ENCODE measurements at regions of chr5 and their contacts with region 1.

Region 1: DNA sequence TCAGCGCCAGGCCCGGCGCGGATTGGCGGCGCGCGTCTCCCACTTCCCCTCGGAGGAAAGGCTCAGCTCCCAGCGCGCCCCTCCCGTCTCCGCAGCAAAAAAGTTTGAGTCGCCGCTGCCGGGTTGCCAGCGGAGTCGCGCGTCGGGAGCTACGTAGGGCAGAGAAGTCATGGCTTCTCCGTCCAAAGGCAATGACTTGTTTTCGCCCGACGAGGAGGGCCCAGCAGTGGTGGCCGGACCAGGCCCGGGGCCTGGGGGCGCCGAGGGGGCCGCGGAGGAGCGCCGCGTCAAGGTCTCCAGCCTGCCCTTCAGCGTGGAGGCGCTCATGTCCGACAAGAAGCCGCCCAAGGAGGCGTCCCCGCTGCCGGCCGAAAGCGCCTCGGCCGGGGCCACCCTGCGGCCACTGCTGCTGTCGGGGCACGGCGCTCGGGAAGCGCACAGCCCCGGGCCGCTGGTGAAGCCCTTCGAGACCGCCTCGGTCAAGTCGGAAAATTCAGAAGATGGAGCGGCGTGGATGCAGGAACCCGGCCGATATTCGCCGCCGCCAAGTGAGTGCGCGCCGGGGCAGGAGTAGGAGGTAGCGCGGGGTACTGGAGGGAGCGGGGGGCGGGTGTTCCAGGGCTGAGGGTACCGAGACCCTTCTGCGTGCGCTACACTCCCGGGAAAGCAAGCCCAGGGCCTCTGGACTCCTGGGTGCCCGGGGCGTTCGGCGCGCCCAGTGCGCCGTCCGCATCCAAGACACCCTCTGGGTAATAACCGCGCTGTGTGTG is at the start of gene MSX2:
- DNase-seq: peak; percentile 88 to 93
- H3K4me3 ChIP-seq: peak within 1 kb of the TSS; percentile 82
- H3K4me1 ChIP-seq: peaks cover 33% of the 10 kb centered on the region
- H3K27me3 ChIP-seq: no peaks in the 10 kb centered on the region

Region 2: DNA sequence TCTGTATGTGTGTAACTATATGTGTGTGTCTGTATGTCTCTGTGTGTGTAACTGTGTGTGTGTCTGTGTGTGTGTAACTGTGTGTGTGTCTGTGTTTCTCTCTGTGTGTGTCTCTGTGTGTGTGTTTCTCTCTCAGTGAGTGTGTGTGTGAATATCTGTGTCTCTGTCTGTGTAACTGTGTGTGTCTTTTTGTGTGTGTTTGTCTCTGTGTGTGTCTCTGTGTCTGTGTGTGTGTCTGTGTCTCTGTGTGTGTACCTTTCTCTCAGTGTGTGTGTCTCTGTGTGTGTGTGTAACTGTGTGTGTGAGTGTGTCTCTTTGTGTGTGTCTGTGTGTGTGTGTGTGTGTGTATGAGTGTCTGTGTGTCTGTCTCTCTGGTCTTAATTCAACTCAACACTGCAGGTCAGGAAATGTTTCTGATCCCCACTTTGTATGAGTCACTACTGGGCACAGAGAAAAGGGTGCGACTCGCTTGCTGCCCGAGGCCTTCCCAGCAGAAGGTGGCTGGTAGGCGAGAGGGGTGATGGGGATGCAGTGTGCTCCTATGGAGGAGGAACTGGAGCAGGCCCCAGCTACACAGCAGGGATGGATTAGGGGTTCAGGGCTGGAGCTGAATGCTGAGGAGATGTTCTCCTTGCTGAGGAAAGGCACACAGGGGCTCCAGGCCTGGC is 627.0 kb before region 1 on chr5:
- in situ Hi-C with region 1: no loop called
- DNase-seq: no peak
- H3K4me3 ChIP-seq: no peak overlapping the region
- H3K4me1 ChIP-seq: no peaks in the 10 kb centered on the region
- H3K27me3 ChIP-seq: no peaks in the 10 kb centered on the region

Region 3: DNA sequence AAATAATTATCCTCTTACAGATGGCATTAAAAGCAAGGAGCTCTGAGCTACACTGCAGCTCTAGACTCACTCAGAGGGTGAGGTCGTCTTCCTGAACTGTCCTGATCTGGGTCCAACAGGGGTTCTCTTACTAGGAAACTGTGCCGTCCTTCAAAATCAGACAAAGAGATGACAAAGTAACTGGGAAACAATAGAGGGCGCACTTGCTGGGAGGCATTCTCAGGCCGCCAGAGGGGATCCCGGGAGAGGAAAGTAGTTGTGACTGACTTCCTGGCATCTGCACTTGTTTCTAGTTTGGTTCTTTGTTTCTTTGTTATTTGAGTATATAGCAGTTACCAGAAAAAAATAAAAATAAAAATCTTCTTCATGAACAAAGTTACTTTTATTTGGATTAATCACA is 143.2 kb before region 1 on chr5:
- in situ Hi-C with region 1: loop called (anchors 10 kb)
- DNase-seq: peak; percentile 46 to 72
- H3K4me3 ChIP-seq: no peak overlapping the region
- H3K4me1 ChIP-seq: no peaks in the 10 kb centered on the region; the same call in 1 of the 2 replicates
- H3K27me3 ChIP-seq: no peaks in the 10 kb centered on the region

Region 4: DNA sequence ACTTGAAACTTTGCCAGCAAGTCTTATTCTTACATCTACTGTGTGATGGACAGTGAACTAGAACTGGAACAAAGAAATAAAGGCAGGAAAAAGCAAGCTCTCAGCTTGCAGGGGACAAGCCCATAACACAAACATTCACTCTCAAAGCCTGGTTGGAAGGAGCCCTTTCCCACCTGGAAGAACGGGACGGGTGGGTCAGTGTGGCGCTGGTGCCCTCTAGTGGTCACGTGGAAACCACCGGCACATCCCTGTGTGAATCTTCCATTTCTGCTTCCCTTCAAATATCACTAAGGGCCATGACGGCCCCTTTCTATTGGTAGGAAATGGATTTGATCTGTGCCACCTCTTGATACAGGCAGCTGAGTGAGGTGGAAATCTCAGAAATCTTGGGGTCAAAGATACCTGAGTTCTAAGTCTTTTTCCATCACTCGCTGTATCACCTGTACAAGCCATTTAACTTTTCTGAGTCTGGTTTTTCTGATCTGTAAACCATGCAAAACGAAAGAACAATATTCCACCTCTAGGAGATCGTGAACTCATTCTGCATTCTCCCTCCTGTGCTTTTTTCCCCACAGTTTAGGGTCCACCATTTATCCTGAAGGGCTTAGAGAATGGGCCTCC is 211.3 kb after region 1 on chr5:
- in situ Hi-C with region 1: no loop called
- DNase-seq: peak; percentile 30 to 79
- H3K4me3 ChIP-seq: no peak overlapping the region
- H3K4me1 ChIP-seq: no peaks in the 10 kb centered on the region
- H3K27me3 ChIP-seq: no peaks in the 10 kb centered on the region

Region 5: DNA sequence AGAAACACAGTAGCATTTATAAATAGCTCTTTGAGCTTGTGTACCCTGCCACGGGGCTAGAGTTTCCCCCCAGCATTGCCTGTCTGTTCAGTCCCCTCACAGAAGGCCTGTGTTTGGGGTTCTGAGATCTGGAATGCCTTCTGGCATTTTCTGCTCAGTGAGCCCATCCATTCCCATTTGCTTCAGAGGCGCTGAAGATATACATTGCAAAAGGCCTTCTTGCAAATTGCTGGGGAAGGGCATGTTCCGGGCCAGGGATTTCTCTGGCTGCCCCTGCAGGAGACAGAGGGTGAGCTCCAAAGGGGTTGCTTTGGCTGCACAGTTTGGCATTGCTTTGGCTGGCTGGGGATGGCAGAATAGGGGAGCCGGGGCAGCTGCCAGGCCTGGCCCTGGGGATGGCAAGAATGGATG is 308.1 kb after region 1 on chr5:
- in situ Hi-C with region 1: no loop called
- DNase-seq: no peak
- H3K4me3 ChIP-seq: no peak overlapping the region
- H3K4me1 ChIP-seq: no peaks in the 10 kb centered on the region
- H3K27me3 ChIP-seq: no peaks in the 10 kb centered on the region

Region 6: DNA sequence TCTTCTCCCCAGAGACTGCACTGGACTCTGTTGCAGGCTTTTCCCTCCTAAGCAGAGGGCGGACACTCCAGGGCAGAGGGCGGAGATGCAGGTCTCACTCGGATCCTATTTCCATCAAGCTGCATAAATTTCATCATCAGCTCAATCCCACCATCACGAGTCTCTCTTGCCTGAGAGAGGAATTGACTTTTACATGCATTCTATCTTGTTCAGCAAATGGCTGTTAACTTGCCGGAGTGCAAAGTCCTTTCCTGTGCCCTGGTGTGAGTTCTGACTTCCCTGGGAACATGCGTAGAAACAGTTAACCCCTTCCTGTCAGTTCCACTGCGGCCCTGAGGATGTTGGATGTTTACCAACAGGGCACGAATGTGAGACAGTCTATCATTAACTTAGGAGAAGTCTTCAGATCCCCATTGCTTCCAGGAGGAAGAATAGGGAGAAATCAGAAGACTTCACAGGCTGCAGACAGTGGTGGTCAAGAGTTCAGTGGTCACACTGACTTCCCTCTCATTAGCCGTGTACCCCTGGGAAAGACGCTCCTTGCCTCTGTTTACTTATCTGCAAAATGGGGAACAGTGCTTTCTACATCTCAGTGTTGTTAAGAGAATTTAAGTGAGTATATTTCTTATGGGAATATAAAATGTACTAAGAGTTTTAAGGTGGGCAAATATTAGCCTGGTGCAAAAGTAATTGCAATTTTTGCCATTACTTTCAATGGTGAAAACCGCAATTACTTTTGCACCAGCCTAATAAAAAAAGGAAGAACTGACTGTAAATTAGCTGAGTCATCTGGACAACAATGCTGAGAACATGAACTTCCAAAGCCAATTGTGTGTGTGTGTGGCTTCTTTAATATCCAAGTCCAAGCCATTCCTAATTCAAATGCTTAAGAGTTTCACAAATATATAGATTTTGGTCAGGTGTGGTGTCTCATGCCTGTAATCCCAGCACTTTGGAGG is 471.3 kb after region 1 on chr5:
- in situ Hi-C with region 1: no loop called
- DNase-seq: no peak
- H3K4me3 ChIP-seq: no peak overlapping the region
- H3K4me1 ChIP-seq: no peaks in the 10 kb centered on the region
- H3K27me3 ChIP-seq: peaks cover 3% of the 10 kb centered on the region; the same call in 1 of the 2 replicates